PC-3 (cell line): ENCODE measurements at regions of chr13 and their contacts with region 1.

Region 1: DNA sequence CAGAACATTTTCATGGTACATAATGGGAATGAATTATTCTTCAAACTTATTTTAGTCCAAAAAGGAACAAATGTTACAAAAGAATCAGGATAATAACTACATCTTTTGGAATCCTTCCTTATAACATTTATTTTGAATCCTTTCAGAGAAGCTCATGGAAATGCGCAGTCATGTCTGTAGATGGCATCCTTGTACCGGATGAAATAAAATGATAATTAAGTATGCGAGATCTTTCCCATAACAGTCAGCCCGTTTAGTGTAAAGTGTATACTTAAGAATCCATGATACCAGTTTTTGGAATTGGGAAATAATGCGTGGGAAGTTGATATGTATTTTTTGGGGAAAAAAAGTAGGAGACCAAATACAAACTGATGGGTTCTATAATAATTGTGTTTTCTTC is 418.8 kb downstream of the GPC5 start:
- DNase-seq: peak; percentile 44
- ATAC-seq: peak; percentile 66
- H3K4me3 ChIP-seq: no peak overlapping the region
- H3K27ac ChIP-seq: no peak overlapping the region
- H3K4me1 ChIP-seq: no peaks in the 10 kb centered on the region
- H3K27me3 ChIP-seq: no peaks in the 10 kb centered on the region
- CTCF ChIP-seq: peak; percentile 50; the same call in 1 of the 2 replicates

Region 2: GRCh38 chr13:91946498-91947070 is 129.3 kb after region 1 on chr13:
- CTCF ChIA-PET with region 1: no interaction called
- POLR2A ChIA-PET with region 1: no interaction called
- intact Hi-C with region 1: loop called (anchors 1 kb)
- DNase-seq: peak; percentile 23
- ATAC-seq: peak; percentile 53; the same call in 1 of the 2 replicates
- H3K4me3 ChIP-seq: no peak overlapping the region
- H3K27ac ChIP-seq: no peak overlapping the region
- H3K4me1 ChIP-seq: no peaks in the 10 kb centered on the region
- H3K27me3 ChIP-seq: no peaks in the 10 kb centered on the region
- CTCF ChIP-seq: peak; percentile 57

Region 3: GRCh38 chr13:92074658-92075057 is 257.4 kb after region 1 on chr13:
- CTCF ChIA-PET with region 1: no interaction called
- POLR2A ChIA-PET with region 1: no interaction called
- intact Hi-C with region 1: loop called (anchors 1 kb)
- DNase-seq: peak; percentile 7
- ATAC-seq: peak; percentile 67
- H3K4me3 ChIP-seq: no peak overlapping the region
- H3K27ac ChIP-seq: no peak overlapping the region
- H3K4me1 ChIP-seq: no peaks in the 10 kb centered on the region
- H3K27me3 ChIP-seq: no peaks in the 10 kb centered on the region
- CTCF ChIP-seq: peak; percentile 51; the same call in 1 of the 2 replicates

Region 4: GRCh38 chr13:92143766-92144165 is 326.5 kb after region 1 on chr13:
- CTCF ChIA-PET with region 1: no interaction called
- POLR2A ChIA-PET with region 1: interaction called, 3 read pairs
- intact Hi-C with region 1: loop called (anchors 1 kb)
- DNase-seq: no peak
- ATAC-seq: peak; percentile 71
- H3K4me3 ChIP-seq: no peak overlapping the region
- H3K27ac ChIP-seq: no peak overlapping the region
- H3K4me1 ChIP-seq: no peaks in the 10 kb centered on the region
- H3K27me3 ChIP-seq: no peaks in the 10 kb centered on the region
- CTCF ChIP-seq: no peak

Region 5: DNA sequence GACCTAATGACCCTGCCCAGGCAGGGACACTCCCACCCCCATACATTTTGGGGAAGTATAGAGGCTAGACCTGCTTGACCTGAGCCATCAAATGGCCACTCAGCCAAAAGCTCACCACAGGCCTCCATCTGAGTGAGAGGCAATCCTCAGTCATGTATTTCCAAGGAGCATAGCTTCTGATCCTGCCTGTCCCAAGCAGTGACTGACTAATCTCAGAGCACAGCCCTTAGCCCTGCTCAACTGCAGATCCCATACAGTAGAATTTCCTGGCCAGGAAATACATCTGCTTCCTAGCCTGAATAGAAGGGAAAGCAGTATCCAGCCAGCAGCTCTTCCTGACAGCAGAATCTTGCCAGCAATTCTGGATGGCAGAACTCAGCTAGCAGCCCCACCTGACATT is 528.8 kb after region 1 on chr13:
- CTCF ChIA-PET with region 1: no interaction called
- POLR2A ChIA-PET with region 1: no interaction called
- intact Hi-C with region 1: loop called (anchors 10 kb)
- DNase-seq: no peak
- ATAC-seq: no peak
- H3K4me3 ChIP-seq: no peak overlapping the region
- H3K27ac ChIP-seq: no peak overlapping the region
- H3K4me1 ChIP-seq: no peaks in the 10 kb centered on the region
- H3K27me3 ChIP-seq: no peaks in the 10 kb centered on the region
- CTCF ChIP-seq: no peak